HEK293 (cell line): ENCODE measurements at regions of chr7 and their contacts with region 1.

Region 1: DNA sequence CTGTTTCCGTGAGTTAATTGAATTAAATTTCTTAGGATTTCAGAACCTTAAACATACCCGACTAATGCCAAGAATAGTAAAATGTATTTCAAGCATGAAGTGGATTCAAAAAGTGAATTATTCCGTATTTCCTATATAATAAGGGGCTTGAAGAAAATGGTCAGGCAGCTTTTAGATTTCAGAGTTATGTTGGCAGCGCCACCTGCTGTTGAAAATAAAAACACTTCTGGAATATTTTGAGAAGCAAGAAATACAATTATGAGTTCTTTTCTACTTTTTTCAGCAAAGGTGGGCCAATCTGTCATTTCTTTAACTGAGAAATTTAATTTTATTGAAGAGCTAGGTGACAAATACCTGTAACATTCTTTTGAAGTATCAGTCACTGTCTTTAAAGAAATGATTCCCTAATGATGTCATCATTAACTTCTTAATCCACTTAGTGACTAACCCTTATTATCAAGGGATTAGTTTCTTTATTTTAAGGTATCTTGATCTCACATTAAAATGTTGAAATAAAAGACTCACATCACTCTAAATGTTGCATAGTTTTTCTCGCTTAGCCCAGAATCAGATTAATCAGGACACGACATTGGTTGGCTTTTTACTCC is 36.6 kb upstream of the AGR3 start:
- H3K4me3 ChIP-seq: no peak overlapping the region
- H3K27ac ChIP-seq: no peak overlapping the region
- H3K4me1 ChIP-seq: no peaks in the 10 kb centered on the region
- CTCF ChIP-seq: no peak

Region 2: DNA sequence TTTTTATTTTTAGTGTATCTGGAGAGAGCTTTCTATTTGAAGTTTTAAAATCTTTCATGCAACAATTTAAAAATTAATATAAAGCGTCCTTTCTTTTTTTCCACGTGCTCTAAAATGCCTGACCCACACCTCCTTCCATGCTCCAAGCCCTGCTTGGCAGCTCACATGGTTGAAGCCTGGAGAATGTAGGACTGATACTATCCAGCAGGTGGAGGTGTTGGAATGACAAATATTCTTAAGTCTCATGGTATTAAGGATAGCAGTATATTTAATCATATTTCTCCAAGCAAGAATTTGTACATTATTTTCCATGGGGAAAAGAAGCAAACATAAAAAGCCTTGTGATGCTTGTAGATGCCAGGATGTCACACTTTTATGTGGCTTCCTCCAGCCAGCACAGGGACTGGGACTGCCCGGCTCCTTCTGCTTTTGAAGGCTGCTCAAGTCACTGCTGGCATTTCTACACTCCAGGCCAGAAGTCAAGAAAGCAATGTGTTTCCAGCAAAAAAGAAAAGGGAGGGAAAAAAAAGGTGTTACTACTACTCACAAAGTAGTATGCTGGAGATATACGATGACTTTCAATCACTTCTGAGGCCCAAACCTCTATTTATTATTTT is 222.7 kb before region 1 on chr7:
- CTCF ChIA-PET with region 1: interaction called, 11 read pairs
- POLR2A ChIA-PET with region 1: no interaction called
- H3K4me3 ChIP-seq: no peak overlapping the region
- H3K27ac ChIP-seq: no peak overlapping the region
- H3K4me1 ChIP-seq: no peaks in the 10 kb centered on the region
- CTCF ChIP-seq: no peak

Region 3: GRCh38 chr7:16801111-16801542 is 117.3 kb before region 1 on chr7:
- CTCF ChIA-PET with region 1: interaction called, 29 read pairs
- POLR2A ChIA-PET with region 1: no interaction called
- H3K4me3 ChIP-seq: no peak overlapping the region
- H3K27ac ChIP-seq: no peak overlapping the region
- H3K4me1 ChIP-seq: no peaks in the 10 kb centered on the region
- CTCF ChIP-seq: no peak

Region 4: DNA sequence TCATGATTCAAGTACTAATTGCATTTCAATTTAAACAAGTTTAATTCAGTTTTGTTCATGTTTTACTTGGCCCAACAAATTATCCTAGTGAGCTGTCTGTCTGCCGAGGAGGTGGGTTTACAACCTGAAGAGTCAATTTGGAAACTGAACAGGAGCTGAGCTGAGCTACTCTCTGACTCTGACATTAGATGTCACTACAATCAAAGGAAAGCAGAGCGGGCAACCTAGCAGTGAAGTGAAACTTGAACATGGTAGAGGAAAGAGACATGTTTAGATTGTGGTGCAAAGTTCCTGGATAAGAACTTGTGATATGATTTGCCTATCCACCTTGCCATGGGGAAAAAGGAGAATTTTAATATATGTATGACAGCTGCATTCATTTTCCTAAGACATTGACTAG is 27.1 kb before region 1 on chr7:
- CTCF ChIA-PET with region 1: interaction called, 50 read pairs
- POLR2A ChIA-PET with region 1: no interaction called
- H3K4me3 ChIP-seq: no peak overlapping the region
- H3K27ac ChIP-seq: no peak overlapping the region
- H3K4me1 ChIP-seq: no peaks in the 10 kb centered on the region
- CTCF ChIP-seq: peak; percentile 52; the same call in 1 of the 2 replicates

Region 5: GRCh38 chr7:16900209-16900768 is 18.1 kb before region 1 on chr7:
- CTCF ChIA-PET with region 1: interaction called, 19 read pairs
- POLR2A ChIA-PET with region 1: no interaction called
- H3K4me3 ChIP-seq: no peak overlapping the region
- H3K27ac ChIP-seq: no peak overlapping the region
- H3K4me1 ChIP-seq: peaks cover 4% of the 10 kb centered on the region
- CTCF ChIP-seq: no peak

Region 6: GRCh38 chr7:16905300-16906044 is 12.9 kb before region 1 on chr7:
- CTCF ChIA-PET with region 1: interaction called, 14 read pairs
- POLR2A ChIA-PET with region 1: no interaction called
- H3K4me3 ChIP-seq: no peak overlapping the region
- H3K27ac ChIP-seq: no peak overlapping the region; the same call in 1 of the 2 replicates
- H3K4me1 ChIP-seq: peaks cover 7% of the 10 kb centered on the region
- CTCF ChIP-seq: no peak

Region 7: GRCh38 chr7:17015598-17016031 is 97.2 kb after region 1 on chr7:
- CTCF ChIA-PET with region 1: no interaction called
- POLR2A ChIA-PET with region 1: no interaction called
- H3K4me3 ChIP-seq: no peak overlapping the region
- H3K27ac ChIP-seq: no peak overlapping the region
- H3K4me1 ChIP-seq: no peaks in the 10 kb centered on the region
- CTCF ChIP-seq: no peak

Region 8: DNA sequence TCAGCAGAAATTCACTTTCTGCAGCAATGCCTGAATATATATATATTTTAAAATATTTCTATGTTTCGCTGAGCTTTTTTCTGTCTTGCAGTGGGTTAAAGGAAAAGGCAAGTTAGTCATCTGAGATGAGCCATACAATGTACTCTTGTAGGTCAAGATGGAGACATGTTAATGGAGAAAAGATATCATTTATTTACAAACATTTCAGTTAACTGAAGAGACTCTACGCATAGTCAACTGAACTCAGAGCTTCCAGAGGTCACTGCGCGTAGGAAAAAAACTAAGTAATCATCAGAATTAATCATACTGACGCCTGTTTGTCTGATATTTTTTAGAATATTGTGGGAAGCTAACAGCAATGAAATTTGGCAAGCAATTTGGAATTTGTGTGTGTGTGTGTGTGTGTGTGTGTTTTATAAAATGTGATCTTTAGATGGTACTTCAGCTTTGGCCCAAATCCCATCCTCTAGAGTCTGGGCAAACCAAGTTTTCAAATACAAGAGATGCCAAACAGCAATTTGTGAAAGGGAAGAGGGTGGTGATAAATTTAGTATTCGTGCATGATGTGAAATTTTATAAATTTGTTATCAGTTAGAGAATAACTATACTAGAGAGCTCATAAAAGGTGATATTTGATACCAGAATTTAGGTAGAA is 157.3 kb after region 1 on chr7:
- CTCF ChIA-PET with region 1: no interaction called
- POLR2A ChIA-PET with region 1: no interaction called
- H3K4me3 ChIP-seq: no peak overlapping the region
- H3K27ac ChIP-seq: no peak overlapping the region
- H3K4me1 ChIP-seq: no peaks in the 10 kb centered on the region
- CTCF ChIP-seq: no peak